ENCODE measurements at regions of chr1 and their contacts with region 1.

Region 1: GRCh38 chr1:178310685-178311105 is 186.1 kb downstream of the CLEC20A start:
- DNase-seq: peak; percentile 88
- H3K4me3 ChIP-seq: no peak overlapping the region
- H3K27ac ChIP-seq: no peak overlapping the region
- H3K4me1 ChIP-seq: peaks cover 10% of the 10 kb centered on the region
- H3K27me3 ChIP-seq: no peaks in the 10 kb centered on the region

Region 2: DNA sequence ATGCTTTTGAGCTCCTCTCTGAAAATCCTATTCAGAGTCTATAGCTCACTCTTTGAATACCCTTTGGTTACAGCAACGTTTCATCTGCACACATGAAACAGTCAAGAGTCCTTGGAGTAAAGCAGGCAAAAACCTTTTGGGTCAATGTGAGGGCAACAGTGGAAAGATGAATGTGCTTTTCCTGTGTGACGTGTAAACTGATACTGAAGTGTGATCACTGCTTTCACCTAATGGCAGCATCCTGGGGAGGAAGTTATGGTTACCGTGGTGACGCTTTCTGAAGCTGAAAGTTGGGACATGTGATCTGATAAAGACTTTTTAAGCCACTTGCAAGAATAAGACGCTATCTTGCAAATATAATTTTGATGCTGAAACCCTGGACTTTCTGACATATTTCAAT is 500.9 kb before region 1 on chr1:
- in situ Hi-C with region 1: no loop called
- DNase-seq: no peak
- H3K4me3 ChIP-seq: no peak overlapping the region
- H3K27ac ChIP-seq: no peak overlapping the region
- H3K4me1 ChIP-seq: no peaks in the 10 kb centered on the region
- H3K27me3 ChIP-seq: no peaks in the 10 kb centered on the region

Region 3: DNA sequence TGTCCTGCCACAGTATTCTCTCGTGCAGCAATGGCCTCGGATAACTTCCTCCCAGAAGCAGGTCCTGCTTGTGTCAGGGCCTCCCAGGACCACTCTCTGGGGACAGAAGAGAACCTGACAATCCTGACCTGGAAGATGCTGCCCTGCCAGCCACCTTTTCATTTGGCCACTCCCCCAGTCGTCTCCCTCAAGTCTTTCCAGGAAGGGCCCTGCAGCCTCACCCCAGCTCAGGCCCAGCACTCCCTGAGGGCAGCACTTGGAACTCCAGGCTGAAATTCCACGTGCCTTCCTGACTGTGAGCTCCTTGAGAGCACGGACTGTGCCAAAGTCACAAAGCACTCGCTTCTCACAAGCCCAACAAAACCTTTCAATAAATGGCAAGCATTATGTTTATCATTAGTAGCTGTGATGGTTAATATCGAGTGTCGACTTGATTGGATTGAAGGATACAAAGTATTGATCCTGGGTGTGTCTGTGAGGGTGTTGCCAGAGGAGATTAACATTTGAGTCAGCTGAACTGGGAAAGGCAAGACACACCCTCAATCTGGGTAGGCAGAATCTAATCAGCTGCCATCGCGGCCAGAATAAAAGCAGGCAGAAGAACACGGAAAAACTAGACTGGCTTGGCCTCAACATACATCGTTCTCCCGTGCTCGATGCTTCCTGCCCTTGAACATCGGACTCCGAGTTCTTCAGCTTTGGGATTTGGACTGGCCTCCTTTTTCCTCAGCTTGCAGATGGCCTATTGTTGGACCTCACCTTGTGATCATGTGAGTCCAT is 188.4 kb after region 1 on chr1:
- in situ Hi-C with region 1: loop called (anchors 10 kb)
- DNase-seq: no peak
- H3K4me3 ChIP-seq: no peak overlapping the region
- H3K27ac ChIP-seq: no peak overlapping the region
- H3K4me1 ChIP-seq: no peaks in the 10 kb centered on the region
- H3K27me3 ChIP-seq: no peaks in the 10 kb centered on the region

Region 4: DNA sequence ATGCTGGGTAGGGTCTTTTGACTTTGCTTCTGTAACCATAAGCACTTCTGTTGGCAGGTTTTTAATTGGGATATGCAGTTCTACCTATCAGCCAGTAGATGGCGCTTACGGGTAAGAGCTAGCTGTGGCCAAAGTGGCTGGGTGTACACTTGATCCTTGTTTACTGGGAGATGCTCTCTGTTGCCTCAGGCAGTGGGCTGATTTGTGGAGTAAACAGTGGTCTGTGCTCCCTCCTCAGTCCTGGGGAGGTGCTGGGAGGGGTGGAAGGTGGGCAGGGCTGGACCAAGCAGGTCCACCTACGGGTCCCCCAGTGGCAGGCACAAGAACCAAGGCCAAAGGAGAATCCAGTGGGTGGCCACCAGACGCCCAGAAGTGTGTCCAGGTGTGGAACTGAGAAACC is 457.7 kb after region 1 on chr1:
- in situ Hi-C with region 1: loop called (anchors 25 kb)
- DNase-seq: peak; percentile 58
- H3K4me3 ChIP-seq: no peak overlapping the region
- H3K27ac ChIP-seq: no peak overlapping the region
- H3K4me1 ChIP-seq: no peaks in the 10 kb centered on the region
- H3K27me3 ChIP-seq: no peaks in the 10 kb centered on the region

Region 5: GRCh38 chr1:179002552-179003345 is 692.1 kb after region 1 on chr1:
- in situ Hi-C with region 1: loop called (anchors 25 kb)
- DNase-seq: peak; percentile 68
- H3K4me3 ChIP-seq: peak overlapping the region; percentile 30; the same call in 1 of the 2 replicates
- H3K27ac ChIP-seq: no peak overlapping the region
- H3K4me1 ChIP-seq: no peaks in the 10 kb centered on the region
- H3K27me3 ChIP-seq: no peaks in the 10 kb centered on the region